ENCODE measurements at regions of chr4 and their contacts with region 1.

Region 1: DNA sequence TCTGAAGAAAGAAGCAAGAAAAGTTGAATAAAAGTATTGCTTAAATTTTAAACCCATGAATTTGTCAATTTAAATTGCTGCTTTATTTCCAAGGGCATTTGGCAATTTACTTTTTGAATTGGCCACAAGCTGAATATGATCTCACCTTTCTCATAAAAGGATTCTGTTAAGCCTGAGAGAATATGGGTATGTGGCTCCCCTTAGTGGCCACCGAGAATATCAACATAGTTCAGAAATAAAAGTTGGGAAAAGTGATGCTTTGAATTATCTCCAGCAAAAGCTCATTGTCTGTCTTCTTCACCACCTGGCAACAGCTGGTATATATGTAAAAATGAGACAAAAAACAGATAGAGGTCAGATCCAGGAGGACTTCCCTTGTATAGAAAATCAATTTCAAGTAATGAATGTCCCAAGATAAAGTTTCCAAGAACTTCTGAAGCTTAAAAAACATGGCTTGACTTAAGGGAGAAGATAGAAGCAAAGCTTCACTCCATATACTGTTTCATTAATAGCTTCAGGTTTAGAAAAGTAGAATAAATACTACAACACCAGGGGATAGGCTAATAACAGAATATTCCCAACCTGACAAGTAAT is 290.7 kb upstream of the FAM241A start:
- H3K4me3 ChIP-seq: no peak overlapping the region
- H3K27ac ChIP-seq: no peak overlapping the region
- H3K4me1 ChIP-seq: no peaks in the 10 kb centered on the region
- CTCF ChIP-seq: 0 out of 2 replicates have a peak, but pooled peaks have one; percentile 32

Region 2: GRCh38 chr4:111641955-111642579 is 212.5 kb before region 1 on chr4:
- CTCF ChIA-PET with region 1: interaction called, 44 read pairs
- POLR2A ChIA-PET with region 1: no interaction called
- H3K4me3 ChIP-seq: no peak overlapping the region
- H3K27ac ChIP-seq: no peak overlapping the region
- H3K4me1 ChIP-seq: no peaks in the 10 kb centered on the region
- CTCF ChIP-seq: peak; percentile 69

Region 3: DNA sequence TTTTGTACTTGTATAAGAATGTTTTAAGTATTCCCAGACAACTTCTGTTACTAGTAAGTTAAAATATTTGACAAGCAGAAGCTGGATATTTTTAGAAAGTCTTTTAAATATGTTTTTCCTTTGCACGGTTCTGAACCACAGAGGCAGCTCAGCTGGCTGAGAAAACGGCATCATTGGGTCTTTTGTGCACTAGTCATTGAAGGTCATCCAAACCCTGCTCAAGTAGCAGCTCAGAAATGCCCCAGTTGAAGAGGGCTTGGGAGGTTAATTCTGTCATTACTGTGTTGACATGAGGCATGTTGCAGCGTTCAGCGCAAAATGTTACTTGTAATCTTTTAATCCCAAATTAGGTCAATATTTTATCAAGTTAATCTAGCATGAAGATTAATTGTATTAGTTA is 93.1 kb before region 1 on chr4:
- CTCF ChIA-PET with region 1: no interaction called
- POLR2A ChIA-PET with region 1: no interaction called
- H3K4me3 ChIP-seq: no peak overlapping the region
- H3K27ac ChIP-seq: no peak overlapping the region
- H3K4me1 ChIP-seq: no peaks in the 10 kb centered on the region
- CTCF ChIP-seq: no peak

Region 4: DNA sequence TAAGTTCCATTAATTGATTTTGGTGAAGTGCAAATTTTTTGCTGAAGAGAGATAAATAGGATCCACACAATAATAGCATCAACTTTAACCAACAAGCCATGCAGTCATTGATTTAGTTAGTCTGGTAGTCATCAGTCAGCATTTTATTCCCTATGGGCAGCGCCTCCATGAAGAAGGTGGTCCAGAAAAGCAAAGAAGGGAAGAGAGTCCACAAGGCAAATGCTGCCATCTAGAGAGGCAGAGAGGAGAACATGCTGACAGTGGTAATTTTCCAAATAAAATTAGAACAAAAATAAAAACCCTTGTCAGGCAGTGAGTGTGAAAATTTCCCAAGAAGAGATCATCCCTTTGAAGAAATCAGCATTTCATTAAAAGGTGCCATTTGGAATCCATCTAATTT is 76.0 kb before region 1 on chr4:
- CTCF ChIA-PET with region 1: interaction called, 18 read pairs
- POLR2A ChIA-PET with region 1: no interaction called
- H3K4me3 ChIP-seq: no peak overlapping the region
- H3K27ac ChIP-seq: no peak overlapping the region
- H3K4me1 ChIP-seq: peaks cover 7% of the 10 kb centered on the region; the same call in 1 of the 2 replicates
- CTCF ChIP-seq: peak; percentile 32; the same call in 1 of the 2 replicates

Region 5: DNA sequence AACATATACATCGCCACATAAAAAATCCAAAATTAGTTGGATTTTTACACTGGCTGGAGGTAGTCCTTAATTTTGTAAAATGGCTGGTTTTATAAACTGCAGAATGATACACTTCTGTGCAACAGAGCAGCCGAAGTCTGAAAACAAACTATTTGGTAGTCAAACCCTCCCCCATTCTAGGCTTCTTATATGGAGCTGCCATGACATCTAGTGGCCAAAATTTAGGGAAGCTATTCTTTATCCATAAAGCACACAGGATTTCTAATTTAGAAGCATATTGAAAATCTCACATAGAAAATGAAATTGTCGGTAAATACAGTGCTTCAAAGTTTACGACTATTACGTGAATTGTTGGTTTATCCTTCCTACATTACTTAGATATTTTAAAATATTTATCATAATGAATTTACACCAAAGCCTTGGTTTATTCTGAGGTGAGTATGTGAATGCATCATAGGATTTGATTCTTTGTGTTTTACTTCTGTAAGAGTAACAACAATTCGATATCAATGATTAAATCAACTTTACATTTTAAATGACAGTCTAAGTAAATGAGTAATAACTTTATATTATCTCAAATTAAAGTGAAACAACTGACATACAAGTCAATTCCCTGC is 177.2 kb after region 1 on chr4:
- CTCF ChIA-PET with region 1: interaction called, 29 read pairs
- POLR2A ChIA-PET with region 1: no interaction called
- H3K4me3 ChIP-seq: no peak overlapping the region
- H3K27ac ChIP-seq: no peak overlapping the region
- H3K4me1 ChIP-seq: no peaks in the 10 kb centered on the region
- CTCF ChIP-seq: peak; percentile 46; the same call in 1 of the 2 replicates